Mammary epithelial cell (primary cell): ENCODE measurements at regions of chr9 and their contacts with region 1.

Region 1: GRCh38 chr9:118522093-118523028 is 818.2 kb downstream of the TLR4 start:
- DNase-seq: peak; percentile 45
- H3K4me3 ChIP-seq: no peak overlapping the region
- H3K27ac ChIP-seq: no peak overlapping the region
- H3K4me1 ChIP-seq: no peaks in the 10 kb centered on the region
- H3K27me3 ChIP-seq: peaks cover 3% of the 10 kb centered on the region
- CTCF ChIP-seq: peak; percentile 67 to 80

Region 2: GRCh38 chr9:117782931-117783788 is 739.2 kb before region 1 on chr9:
- CTCF ChIA-PET with region 1: no interaction called
- dilution Hi-C with region 1: no loop called
- in situ Hi-C with region 1: no loop called
- intact Hi-C with region 1: loop called (anchors 5 kb)
- DNase-seq: peak; percentile 71
- H3K4me3 ChIP-seq: peak overlapping the region; percentile 54 to 72 (median 55)
- H3K27ac ChIP-seq: no peak overlapping the region
- H3K4me1 ChIP-seq: peaks cover 7% of the 10 kb centered on the region
- H3K27me3 ChIP-seq: no peaks in the 10 kb centered on the region
- CTCF ChIP-seq: peak; percentile 92 to 93

Region 3: GRCh38 chr9:118577121-118577520 is 54.8 kb after region 1 on chr9:
- CTCF ChIA-PET with region 1: no interaction called
- dilution Hi-C with region 1: no loop called
- in situ Hi-C with region 1: no loop called
- intact Hi-C with region 1: loop called (anchors 5 kb)
- DNase-seq: peak; percentile 41
- H3K4me3 ChIP-seq: no peak overlapping the region
- H3K27ac ChIP-seq: peak overlapping the region; percentile 51
- H3K4me1 ChIP-seq: peaks cover 9% of the 10 kb centered on the region
- H3K27me3 ChIP-seq: no peaks in the 10 kb centered on the region
- CTCF ChIP-seq: no peak

Region 4: DNA sequence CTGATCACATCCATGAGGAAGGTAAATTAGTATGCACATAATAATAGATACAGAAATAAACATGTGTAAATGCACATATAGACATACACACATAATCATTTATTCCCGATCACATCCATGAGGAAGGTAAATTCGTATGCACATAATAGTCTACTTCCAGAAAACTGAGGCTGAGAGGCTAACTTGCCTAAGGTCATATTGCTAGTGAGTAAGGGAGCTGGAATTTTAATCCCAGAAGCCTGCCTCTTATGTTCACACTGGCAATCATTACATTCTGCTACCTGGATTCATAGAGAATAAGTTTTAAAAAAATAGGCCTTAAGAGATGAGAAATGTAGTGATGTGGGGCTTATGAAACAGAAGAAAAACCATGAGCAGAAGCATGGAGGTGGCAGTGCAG is 130.6 kb after region 1 on chr9:
- CTCF ChIA-PET with region 1: no interaction called
- dilution Hi-C with region 1: no loop called
- in situ Hi-C with region 1: no loop called
- intact Hi-C with region 1: loop called (anchors 10 kb)
- DNase-seq: peak; percentile 57
- H3K4me3 ChIP-seq: no peak overlapping the region
- H3K27ac ChIP-seq: no peak overlapping the region
- H3K4me1 ChIP-seq: peaks cover 16% of the 10 kb centered on the region
- H3K27me3 ChIP-seq: no peaks in the 10 kb centered on the region
- CTCF ChIP-seq: no peak

Region 5: DNA sequence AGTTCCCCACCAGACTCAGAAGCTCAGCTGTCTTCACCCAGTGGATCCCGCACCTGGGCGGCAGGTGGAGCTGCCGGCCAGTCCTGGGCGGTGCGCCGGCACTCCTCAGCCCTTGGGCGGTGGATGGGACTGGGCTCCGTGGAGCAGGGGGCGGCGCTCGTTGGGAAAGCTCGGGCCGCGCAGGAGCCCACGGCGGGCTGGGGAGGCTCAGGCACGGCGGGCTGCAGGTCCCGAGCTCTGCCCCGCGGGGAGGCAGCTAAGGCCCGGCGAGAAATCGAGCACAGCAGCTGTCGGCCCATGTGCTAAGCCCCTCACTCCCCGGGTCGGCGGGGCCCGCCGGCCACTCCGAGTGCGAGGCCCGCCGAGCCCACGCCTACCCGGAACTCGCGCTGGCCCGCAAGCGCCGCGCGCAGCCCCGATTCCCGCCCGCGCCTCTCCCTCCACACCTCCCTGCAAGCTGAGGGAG is 286.8 kb after region 1 on chr9:
- CTCF ChIA-PET with region 1: no interaction called
- dilution Hi-C with region 1: no loop called
- in situ Hi-C with region 1: no loop called
- intact Hi-C with region 1: loop called (anchors 10 kb)
- DNase-seq: no peak
- H3K4me3 ChIP-seq: no peak overlapping the region
- H3K27ac ChIP-seq: no peak overlapping the region
- H3K4me1 ChIP-seq: no peaks in the 10 kb centered on the region
- H3K27me3 ChIP-seq: no peaks in the 10 kb centered on the region
- CTCF ChIP-seq: no peak